ENCODE measurements at regions of chr6 and their contacts with region 1.

Region 1: GRCh38 chr6:797479-798077 is 104.6 kb upstream of the EXOC2 start:
- DNase-seq: peak in 3 of 6 donors; percentile 27 to 64 (median 34)
- ATAC-seq: peak; percentile 74 to 93 (median 91)
- H3K4me3 ChIP-seq: no peak overlapping the region
- H3K27ac ChIP-seq: no peak overlapping the region
- H3K4me1 ChIP-seq: no peaks in the 10 kb centered on the region
- H3K27me3 ChIP-seq: peaks cover 0 to 25% (median 0%) of the 10 kb centered on the region in 4 donors
- CTCF ChIP-seq: peak; percentile 57 to 79 (median 66)

Region 2: GRCh38 chr6:650098-650497 is 147.5 kb before region 1 on chr6:
- intact Hi-C with region 1: no loop called
- DNase-seq: no peak
- ATAC-seq: no peak
- H3K4me3 ChIP-seq: no peak overlapping the region
- H3K27ac ChIP-seq: no peak overlapping the region
- H3K4me1 ChIP-seq: no peaks in the 10 kb centered on the region
- H3K27me3 ChIP-seq: no peaks in the 10 kb centered on the region
- CTCF ChIP-seq: no peak

Region 3: DNA sequence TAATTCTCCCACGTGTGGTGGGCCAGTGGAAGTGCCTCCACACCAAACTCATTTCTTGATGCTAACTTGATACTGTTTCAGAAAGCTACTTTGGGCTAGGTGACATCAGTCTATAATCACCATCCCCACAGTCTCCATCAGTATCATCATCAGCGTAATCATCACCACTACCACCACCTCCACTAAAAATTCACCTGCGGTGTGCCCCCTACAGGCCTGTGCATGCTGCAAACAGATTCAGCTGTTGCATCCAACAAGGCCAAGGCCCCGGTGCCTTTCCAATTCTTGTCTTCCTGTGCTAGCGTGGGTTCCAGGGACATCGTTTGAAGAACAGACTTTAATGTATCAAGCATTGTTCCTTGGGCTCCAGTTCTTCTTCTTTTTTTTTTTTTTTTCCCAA is 96.7 kb after region 1 on chr6:
- intact Hi-C with region 1: loop called in 1 of 3 experiments (anchors 10 kb)
- DNase-seq: no peak
- ATAC-seq: no peak
- H3K4me3 ChIP-seq: no peak overlapping the region
- H3K27ac ChIP-seq: no peak overlapping the region
- H3K4me1 ChIP-seq: no peaks in the 10 kb centered on the region
- H3K27me3 ChIP-seq: no peaks in the 10 kb centered on the region
- CTCF ChIP-seq: no peak

Region 4: DNA sequence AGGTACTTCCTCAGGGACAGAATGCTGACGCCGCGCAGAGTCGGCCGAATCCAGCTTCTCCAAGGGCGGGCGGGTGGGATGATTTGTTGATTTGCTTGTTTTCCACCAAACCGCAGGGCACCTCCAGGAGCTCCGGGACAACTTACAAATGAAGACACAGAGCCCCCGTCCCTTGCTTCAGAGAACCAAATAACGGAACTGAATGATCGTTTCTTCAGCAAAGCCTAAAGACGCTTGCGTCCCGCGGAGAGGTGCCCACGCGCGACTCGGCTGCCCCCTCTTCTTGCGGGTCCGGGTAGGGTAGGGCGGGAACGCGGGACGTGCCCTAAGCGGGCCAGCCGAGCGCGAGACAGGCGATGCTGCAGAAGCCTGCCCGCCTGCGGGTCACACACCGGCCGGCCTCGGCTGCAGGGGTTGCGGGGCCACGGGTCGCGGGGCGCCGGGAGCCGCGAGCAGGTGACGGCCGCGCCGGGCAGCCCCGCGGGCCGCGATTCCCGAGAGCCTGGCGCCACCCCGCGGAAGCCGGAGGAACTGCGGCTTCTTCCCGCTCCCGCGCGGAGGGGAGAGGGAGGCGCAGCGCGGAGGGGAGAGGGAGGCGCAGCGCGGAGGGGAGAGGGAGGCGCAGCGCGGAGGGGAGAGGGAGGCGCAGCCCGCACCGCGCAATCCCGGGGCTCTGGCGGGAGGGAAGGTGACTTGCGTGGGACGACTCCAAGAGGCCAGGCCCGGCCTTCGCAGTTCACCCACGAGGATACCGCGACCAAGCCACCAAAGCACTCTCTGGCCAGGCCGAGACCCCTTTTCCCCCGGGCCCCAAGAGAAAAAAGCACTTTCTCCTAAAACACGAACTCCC is 584.1 kb after region 1 on chr6:
- intact Hi-C with region 1: loop called in 2 of 3 experiments (anchors 5 to 10 kb)
- DNase-seq: peak in 5 of 6 donors; percentile 30 to 93 (median 73)
- ATAC-seq: peak; percentile 84 to 93 (median 90)
- H3K4me3 ChIP-seq: peak overlapping the region in 3 of 4 donors; percentile 7 to 46 (median 17)
- H3K27ac ChIP-seq: no peak overlapping the region
- H3K4me1 ChIP-seq: peaks cover 0 to 15% (median 13%) of the 10 kb centered on the region in 3 donors
- H3K27me3 ChIP-seq: peaks cover 0 to 64% (median 22%) of the 10 kb centered on the region in 4 donors
- CTCF ChIP-seq: peak; percentile 79 to 92 (median 84)